ENCODE measurements at regions of chrX and their contacts with region 1.

Region 1: DNA sequence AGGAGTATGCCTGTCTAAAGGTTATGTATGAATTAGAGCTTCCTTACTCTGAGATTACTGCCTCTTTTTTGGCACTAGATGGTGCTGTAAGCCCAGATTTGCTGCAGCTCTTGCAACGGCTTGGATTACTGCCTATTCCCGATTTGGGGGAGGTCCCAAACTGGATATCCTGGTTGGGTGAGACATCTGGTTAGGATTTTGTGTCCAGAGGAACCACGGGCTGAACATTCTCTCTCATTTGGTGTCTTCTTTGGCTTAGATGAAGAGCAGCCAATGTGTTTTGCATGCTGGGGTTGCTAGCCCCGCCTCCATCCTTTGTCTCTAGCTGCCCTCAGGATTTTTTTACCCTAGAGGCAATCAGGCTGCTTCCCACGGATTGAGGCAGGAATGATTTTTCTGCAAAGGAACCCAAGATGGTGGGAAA is 31.9 kb downstream of the F8A1 start:
- DNase-seq: peak; percentile 67
- H3K4me3 ChIP-seq: peak overlapping the region in 1 of 3 experiments; percentile 23
- H3K27ac ChIP-seq: no peak overlapping the region
- H3K4me1 ChIP-seq: no peaks in the 10 kb centered on the region
- H3K27me3 ChIP-seq: peaks cover 0 to 4% of the 10 kb centered on the region in 2 experiments
- CTCF ChIP-seq: peak; percentile 40 to 53
- POLR2A ChIP-seq: no peak

Region 2: DNA sequence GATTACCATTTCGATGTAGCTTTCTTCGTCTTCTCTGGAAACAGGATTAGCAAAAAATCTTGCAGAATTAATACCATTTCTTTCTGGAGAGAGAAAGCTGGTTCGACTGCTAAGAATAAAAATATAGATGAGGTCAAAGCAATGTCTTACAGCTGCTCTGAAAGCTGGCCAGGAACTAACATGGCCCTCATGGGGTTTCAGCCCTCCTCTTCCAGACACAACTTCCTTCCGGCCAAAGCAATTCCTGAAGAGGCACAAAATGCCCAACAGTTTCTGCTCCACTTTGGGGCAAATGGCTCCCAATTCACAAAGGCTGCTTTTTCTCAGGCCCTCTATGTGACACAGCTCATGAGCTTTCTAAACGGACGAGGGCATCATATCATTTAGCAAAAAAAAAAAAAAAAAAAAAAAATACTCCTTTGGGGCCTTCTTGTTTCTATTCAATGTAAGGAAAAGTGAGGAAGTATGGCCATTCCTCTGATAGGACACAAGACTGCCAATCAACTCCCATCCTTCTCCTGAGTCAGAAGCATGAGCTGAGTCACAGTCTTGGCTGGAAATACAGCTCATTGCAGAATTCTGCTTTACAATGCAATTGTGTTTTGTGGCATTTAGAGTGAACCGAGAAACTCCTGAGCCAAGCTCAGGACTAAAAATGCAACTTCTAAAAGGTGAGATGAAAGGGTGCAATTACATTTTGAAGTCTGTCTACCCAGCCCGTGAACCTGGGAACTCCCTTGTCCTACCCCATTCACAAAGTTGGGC is 222.0 kb before region 1 on chrX:
- CTCF ChIA-PET with region 1: no interaction called
- POLR2A ChIA-PET with region 1: no interaction called
- dilution Hi-C with region 1: no loop called
- intact Hi-C with region 1: no loop called
- DNase-seq: peak; percentile 3
- H3K4me3 ChIP-seq: no peak overlapping the region
- H3K27ac ChIP-seq: no peak overlapping the region
- H3K4me1 ChIP-seq: peaks cover 3% of the 10 kb centered on the region
- H3K27me3 ChIP-seq: no peaks in the 10 kb centered on the region
- CTCF ChIP-seq: no peak
- POLR2A ChIP-seq: no peak

Region 3: GRCh38 chrX:154855256-154855655 is 62.8 kb before region 1 on chrX:
- CTCF ChIA-PET with region 1: no interaction called
- POLR2A ChIA-PET with region 1: no interaction called
- dilution Hi-C with region 1: no loop called
- intact Hi-C with region 1: no loop called
- DNase-seq: no peak
- H3K4me3 ChIP-seq: no peak overlapping the region
- H3K27ac ChIP-seq: no peak overlapping the region
- H3K4me1 ChIP-seq: no peaks in the 10 kb centered on the region
- H3K27me3 ChIP-seq: no peaks in the 10 kb centered on the region
- CTCF ChIP-seq: no peak
- POLR2A ChIP-seq: no peak

Region 4: GRCh38 chrX:155020591-155020990 is 102.5 kb after region 1 on chrX:
- CTCF ChIA-PET with region 1: no interaction called
- POLR2A ChIA-PET with region 1: no interaction called
- dilution Hi-C with region 1: no loop called
- intact Hi-C with region 1: no loop called
- DNase-seq: no peak
- H3K4me3 ChIP-seq: no peak overlapping the region
- H3K27ac ChIP-seq: no peak overlapping the region
- H3K4me1 ChIP-seq: no peaks in the 10 kb centered on the region
- H3K27me3 ChIP-seq: peaks cover 2 to 5% of the 10 kb centered on the region in 2 experiments
- CTCF ChIP-seq: no peak
- POLR2A ChIP-seq: no peak

Region 5: GRCh38 chrX:155056877-155057792 is 139.1 kb after region 1 on chrX:
- CTCF ChIA-PET with region 1: interaction called, 26 read pairs
- POLR2A ChIA-PET with region 1: no interaction called
- dilution Hi-C with region 1: no loop called
- intact Hi-C with region 1: loop called (anchors 1 kb)
- DNase-seq: peak; percentile 82
- H3K4me3 ChIP-seq: no peak overlapping the region
- H3K27ac ChIP-seq: no peak overlapping the region
- H3K4me1 ChIP-seq: peaks cover 11% of the 10 kb centered on the region
- H3K27me3 ChIP-seq: no peaks in the 10 kb centered on the region
- CTCF ChIP-seq: peak; percentile 61 to 78
- POLR2A ChIP-seq: no peak

Region 6: GRCh38 chrX:155132110-155132509 is 214.0 kb after region 1 on chrX:
- CTCF ChIA-PET with region 1: interaction called, 11 read pairs
- POLR2A ChIA-PET with region 1: no interaction called
- dilution Hi-C with region 1: no loop called
- intact Hi-C with region 1: no loop called
- DNase-seq: no peak
- H3K4me3 ChIP-seq: no peak overlapping the region
- H3K27ac ChIP-seq: no peak overlapping the region
- H3K4me1 ChIP-seq: no peaks in the 10 kb centered on the region
- H3K27me3 ChIP-seq: no peaks in the 10 kb centered on the region
- CTCF ChIP-seq: no peak
- POLR2A ChIP-seq: no peak

Region 7: GRCh38 chrX:155148724-155149537 is 230.9 kb after region 1 on chrX:
- CTCF ChIA-PET with region 1: interaction called, 83 read pairs
- POLR2A ChIA-PET with region 1: no interaction called
- dilution Hi-C with region 1: no loop called
- intact Hi-C with region 1: loop called (anchors 1 kb)
- DNase-seq: peak; percentile 20
- H3K4me3 ChIP-seq: no peak overlapping the region
- H3K27ac ChIP-seq: no peak overlapping the region
- H3K4me1 ChIP-seq: no peaks in the 10 kb centered on the region
- H3K27me3 ChIP-seq: no peaks in the 10 kb centered on the region
- CTCF ChIP-seq: peak; percentile 37 to 42
- POLR2A ChIP-seq: no peak

Region 8: GRCh38 chrX:155216179-155216939 is 298.3 kb after region 1 on chrX and contains the start of gene VBP1:
- CTCF ChIA-PET with region 1: interaction called, 25 read pairs
- POLR2A ChIA-PET with region 1: no interaction called
- dilution Hi-C with region 1: no loop called
- intact Hi-C with region 1: no loop called
- DNase-seq: peak; percentile 95
- H3K4me3 ChIP-seq: peak within 1 kb of the TSS; percentile 79 to 97 (median 91)
- H3K27ac ChIP-seq: peak within 1 kb of the TSS; percentile 85
- H3K4me1 ChIP-seq: peaks cover 14% of the 10 kb centered on the region
- H3K27me3 ChIP-seq: no peaks in the 10 kb centered on the region
- CTCF ChIP-seq: peak; percentile 21 to 46
- POLR2A ChIP-seq: peak; percentile 51
- total RNA-seq, gene VBP1: 45.8 and 51.5 TPM in 2 replicates

Region 9: GRCh38 chrX:155819966-155820491 is 902.0 kb after region 1 on chrX:
- CTCF ChIA-PET with region 1: no interaction called
- POLR2A ChIA-PET with region 1: no interaction called
- dilution Hi-C with region 1: no loop called
- intact Hi-C with region 1: loop called (anchors 1 kb)
- DNase-seq: peak; percentile 77
- H3K4me3 ChIP-seq: no peak overlapping the region
- H3K27ac ChIP-seq: no peak overlapping the region
- H3K4me1 ChIP-seq: no peaks in the 10 kb centered on the region
- H3K27me3 ChIP-seq: no peaks in the 10 kb centered on the region
- CTCF ChIP-seq: peak; percentile 40 to 61
- POLR2A ChIP-seq: no peak